Heart left ventricle (tissue), 16 donors: ENCODE measurements at regions of chr9 and their contacts with region 1.

Region 1: DNA sequence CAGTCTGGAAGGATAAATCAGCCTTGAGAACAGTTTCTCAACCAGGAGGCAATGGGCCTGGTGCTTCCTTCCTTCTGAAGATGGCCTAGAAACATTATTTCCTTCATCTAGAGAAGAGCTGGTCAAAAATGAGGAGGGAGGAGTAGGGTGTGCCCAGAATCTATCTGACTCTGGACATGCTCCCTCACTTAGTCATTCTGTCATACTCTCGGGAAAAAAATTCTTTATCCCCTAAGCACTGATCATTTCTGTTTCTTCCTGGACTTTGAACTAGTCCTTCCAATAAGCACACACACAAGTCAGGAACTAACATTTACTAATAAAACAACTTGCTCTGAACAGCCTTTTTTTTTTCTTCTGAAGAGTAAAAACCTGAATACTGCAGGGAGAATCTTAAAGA is 160.5 kb downstream of the ZDHHC21 start:
- DNase-seq: no peak
- ATAC-seq: no peak
- H3K4me3 ChIP-seq: no peak overlapping the region
- H3K27ac ChIP-seq: no peak overlapping the region
- H3K4me1 ChIP-seq: peaks cover 0 to 22% (median 8%) of the 10 kb centered on the region in 12 donors
- H3K27me3 ChIP-seq: no peaks in the 10 kb centered on the region
- CTCF ChIP-seq: no peak
- POLR2A ChIP-seq: no peak

Region 2: GRCh38 chr9:14485366-14485765 is 47.4 kb before region 1 on chr9:
- intact Hi-C with region 1: loop called in 1 of 10 experiments (anchors 10 kb)
- DNase-seq: no peak
- ATAC-seq: no peak
- H3K4me3 ChIP-seq: no peak overlapping the region
- H3K27ac ChIP-seq: no peak overlapping the region
- H3K4me1 ChIP-seq: no peaks in the 10 kb centered on the region
- H3K27me3 ChIP-seq: no peaks in the 10 kb centered on the region
- CTCF ChIP-seq: no peak
- POLR2A ChIP-seq: no peak